ENCODE measurements at regions of chr14 and their contacts with region 1.

Region 1: DNA sequence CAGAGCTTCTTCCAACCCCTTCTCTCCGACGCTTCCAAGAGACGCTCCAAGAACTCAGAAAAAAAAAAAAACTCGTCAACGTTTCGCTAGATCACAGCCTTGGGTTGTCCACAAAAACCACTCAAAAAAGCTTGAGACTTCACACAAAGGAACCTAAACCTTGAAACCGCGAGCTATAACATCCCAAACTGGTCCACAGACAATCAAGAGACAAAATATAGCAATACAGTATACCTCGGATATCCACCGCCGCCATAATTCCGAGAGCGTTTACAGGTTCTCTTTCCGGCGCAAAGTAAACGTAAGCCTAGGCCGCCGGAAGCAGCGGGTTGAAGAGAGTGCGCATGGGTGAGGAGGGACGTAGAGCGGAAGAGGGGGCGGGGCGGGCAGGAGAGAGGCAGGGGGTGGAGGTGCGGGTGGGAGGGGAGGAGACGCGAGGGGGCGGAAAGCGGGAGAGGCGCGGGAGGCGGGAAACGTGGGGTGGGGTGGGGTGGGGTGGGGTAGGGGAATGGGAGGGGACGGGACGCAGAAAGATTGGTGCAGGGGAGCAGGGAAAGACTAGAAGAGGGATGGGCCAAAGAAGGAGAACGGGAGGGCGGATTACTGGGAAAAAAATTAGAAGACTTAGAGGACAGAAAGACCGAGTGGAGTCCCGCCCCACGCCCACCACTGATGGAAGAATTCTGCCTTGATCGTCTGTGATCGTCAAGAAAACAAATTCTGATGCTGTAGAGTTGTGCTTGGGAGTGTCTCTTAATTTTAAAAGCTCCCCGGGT is at the start of gene MED6:
- DNase-seq: peak; percentile 91
- H3K4me3 ChIP-seq: peak within 1 kb of the TSS; percentile 61 to 80
- H3K27ac ChIP-seq: peak within 1 kb of the TSS; percentile 63 to 66
- H3K4me1 ChIP-seq: peaks cover 9% of the 10 kb centered on the region
- H3K27me3 ChIP-seq: no peaks in the 10 kb centered on the region
- CTCF ChIP-seq: no peak
- POLR2A ChIP-seq: no peak
- total RNA-seq, gene MED6: 27.4 to 41.4 TPM

Region 2: DNA sequence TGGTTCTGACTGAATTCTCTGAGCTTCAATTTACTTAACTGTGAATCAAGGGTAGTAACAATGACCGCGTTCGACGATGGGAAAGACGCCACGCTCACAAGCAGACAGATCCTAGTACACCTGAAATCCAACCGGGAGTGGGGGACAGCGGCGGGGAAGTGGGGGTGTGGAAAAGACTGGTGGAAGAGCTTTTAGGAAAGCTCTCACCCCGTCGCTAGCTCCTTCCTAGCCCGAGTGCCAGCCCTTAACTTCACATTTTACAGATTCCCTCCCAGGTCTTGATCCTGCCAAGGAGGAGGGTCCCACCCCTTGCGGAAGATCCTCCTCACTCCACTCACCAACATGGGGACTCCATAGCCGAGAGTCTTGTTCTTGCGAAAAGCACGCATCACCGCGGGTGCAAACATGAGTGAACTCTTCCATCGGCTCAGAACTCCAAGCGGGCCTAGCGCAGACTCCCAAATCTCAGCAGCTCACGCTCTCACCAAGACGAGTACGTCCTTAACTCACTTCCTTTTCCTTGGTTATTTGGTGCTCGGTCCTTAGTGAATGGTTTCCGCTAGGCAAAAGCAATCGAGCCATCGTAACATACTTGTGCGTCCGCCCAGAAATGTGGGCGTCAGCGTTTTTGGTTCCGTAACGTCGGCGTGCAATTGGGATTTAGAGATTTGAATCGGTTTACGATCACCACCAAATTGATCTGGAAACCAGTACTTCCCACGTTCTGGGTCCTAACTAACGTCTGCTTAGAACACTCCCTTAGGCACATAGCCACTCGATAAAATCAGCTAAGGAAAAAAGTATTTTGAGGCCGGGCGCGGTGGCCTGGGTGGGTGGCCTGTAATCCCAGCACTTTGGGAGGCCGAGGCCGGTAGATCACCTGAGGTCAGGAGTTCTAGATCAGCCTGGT is 241.1 kb before region 1 on chr14 and contains the start of gene COX16:
- intact Hi-C with region 1: loop called (anchors 10 kb)
- DNase-seq: peak; percentile 85
- H3K4me3 ChIP-seq: peak within 1 kb of the TSS; percentile 59 to 73
- H3K27ac ChIP-seq: peak within 1 kb of the TSS; percentile 77 to 88
- H3K4me1 ChIP-seq: no peaks in the 10 kb centered on the region
- H3K27me3 ChIP-seq: no peaks in the 10 kb centered on the region
- CTCF ChIP-seq: peak in 1 of 4 experiments; percentile 21
- POLR2A ChIP-seq: peak; percentile 26
- total RNA-seq, gene COX16: 19.3 to 43.8 TPM

Measured in prostate gland (tissue), 2 donors.